ENCODE measurements at regions of chr16 and their contacts with region 1.

Region 1: GRCh38 chr16:72400257-72400882 is 228.4 kb upstream of the PMFBP1 start:
- DNase-seq: peak; percentile 60
- H3K4me3 ChIP-seq: no peak overlapping the region
- H3K27ac ChIP-seq: no peak overlapping the region
- H3K4me1 ChIP-seq: no peaks in the 10 kb centered on the region
- CTCF ChIP-seq: peak; percentile 88

Region 2: DNA sequence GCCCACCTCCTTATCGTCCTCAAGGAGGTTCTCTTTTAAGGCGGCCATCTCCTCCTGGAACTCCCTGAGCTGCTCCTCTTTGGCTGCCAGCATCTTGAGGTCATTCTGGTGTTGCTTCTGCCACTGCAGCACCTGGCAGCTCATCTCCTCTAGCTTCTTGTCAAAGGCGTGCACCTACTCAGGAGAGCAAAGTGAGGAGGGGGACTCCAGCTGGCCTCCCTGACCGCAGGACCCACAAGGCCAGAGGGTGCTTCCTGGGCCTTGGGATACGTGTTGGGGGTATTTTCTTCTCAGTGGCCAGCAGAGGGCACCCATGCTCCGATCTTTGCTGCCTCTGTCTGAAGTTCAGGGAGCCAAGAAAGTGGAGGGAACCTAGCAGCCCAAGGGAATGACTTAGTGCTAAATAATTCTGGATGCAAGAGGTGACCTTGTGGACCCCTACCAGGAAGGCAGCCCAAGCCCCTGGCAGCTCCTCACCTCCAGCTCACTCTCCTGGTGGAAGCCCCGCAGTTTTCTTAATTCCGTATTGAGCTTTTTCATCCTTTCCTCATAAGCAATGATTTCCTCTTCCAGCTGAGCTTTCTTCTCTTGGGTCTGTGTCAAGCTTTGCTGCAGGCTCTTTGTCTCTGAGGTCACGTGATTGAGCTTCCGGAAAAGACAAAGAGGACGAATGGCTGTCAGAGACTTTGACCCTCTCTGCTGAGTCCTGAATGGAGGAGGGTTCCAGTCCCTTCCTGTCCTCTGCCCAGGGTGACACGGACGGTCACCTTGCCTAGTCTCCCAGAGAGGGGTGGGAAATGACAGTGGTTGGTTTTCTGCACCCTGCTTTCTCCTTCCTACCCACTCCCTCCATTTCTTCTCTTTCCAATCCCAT is 275.4 kb before region 1 on chr16:
- CTCF ChIA-PET with region 1: no interaction called
- POLR2A ChIA-PET with region 1: no interaction called
- intact Hi-C with region 1: loop called (anchors 10 kb)
- DNase-seq: peak; percentile 66
- H3K4me3 ChIP-seq: no peak overlapping the region
- H3K27ac ChIP-seq: no peak overlapping the region
- H3K4me1 ChIP-seq: no peaks in the 10 kb centered on the region
- CTCF ChIP-seq: peak; percentile 91

Region 3: DNA sequence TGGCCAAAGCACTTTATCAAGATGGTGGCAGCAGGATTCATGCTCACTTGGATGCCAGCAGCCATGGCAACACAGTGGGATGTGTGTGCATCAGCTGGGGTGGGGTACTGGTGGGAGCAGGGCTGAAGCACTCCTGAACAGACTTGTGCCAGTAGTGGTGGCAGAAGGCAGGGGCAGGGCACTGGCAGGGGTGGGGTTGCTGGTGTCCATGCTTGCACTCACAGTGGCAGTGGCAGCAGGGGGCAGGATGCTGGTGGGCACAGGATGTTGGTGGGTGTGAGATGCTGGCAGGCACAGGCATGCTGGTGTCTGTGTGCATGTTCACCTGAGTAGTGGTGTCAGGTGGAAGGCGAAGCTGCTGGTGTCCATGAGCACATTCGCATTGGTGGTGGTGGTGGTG is 67.4 kb before region 1 on chr16:
- CTCF ChIA-PET with region 1: no interaction called
- POLR2A ChIA-PET with region 1: no interaction called
- intact Hi-C with region 1: no loop called
- DNase-seq: no peak
- H3K4me3 ChIP-seq: no peak overlapping the region
- H3K27ac ChIP-seq: no peak overlapping the region
- H3K4me1 ChIP-seq: no peaks in the 10 kb centered on the region
- CTCF ChIP-seq: no peak

Region 4: DNA sequence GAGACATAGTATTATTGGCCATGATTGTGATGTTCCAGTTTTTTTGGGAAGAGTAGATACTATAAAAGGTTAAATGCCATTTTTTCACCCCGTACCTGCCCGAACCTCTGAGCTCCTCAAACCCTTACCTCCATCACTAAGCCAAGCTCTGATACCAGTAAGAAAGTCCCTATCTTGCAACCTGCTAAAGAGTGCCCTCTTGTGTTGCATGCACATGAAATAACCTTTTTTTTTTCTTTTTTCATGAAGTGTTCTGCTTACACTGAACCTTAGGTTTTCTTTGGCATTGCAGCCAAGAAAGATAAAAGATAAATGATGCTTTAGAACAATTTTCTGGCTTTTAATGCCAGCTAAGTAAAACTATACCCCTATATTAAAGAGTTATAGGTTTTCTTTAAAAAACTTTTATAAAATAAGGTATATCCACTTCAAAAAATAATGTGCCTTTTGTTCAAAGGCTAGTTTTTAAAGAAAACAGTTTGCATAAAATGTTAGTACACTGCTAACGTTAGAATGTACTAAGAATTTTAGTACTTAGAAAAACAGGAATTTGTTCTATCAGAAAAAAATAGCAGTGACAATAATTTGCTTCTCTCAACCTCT is 66.9 kb after region 1 on chr16:
- CTCF ChIA-PET with region 1: interaction called, 4 read pairs
- POLR2A ChIA-PET with region 1: no interaction called
- intact Hi-C with region 1: loop called (anchors 5 kb)
- DNase-seq: peak; percentile 46
- H3K4me3 ChIP-seq: no peak overlapping the region
- H3K27ac ChIP-seq: no peak overlapping the region
- H3K4me1 ChIP-seq: no peaks in the 10 kb centered on the region
- CTCF ChIP-seq: peak; percentile 83

Measured in OCI-LY7 (cell line).